ENCODE measurements at regions of chr21 and their contacts with region 1.

Region 1: GRCh38 chr21:32994305-32994704 is 31.4 kb upstream of the OLIG2 start:
- DNase-seq: peak; percentile 40
- H3K4me3 Mint-ChIP-seq: no peak overlapping the region
- H3K27ac Mint-ChIP-seq: no peak overlapping the region
- H3K4me1 Mint-ChIP-seq: peaks cover 7% of the 10 kb centered on the region
- H3K27me3 Mint-ChIP-seq: peaks cover 64% of the 10 kb centered on the region
- CTCF ChIP-seq: peak; percentile 56

Region 2: GRCh38 chr21:33007747-33008146 is 13.4 kb after region 1 on chr21:
- CTCF ChIA-PET with region 1: interaction called, 11 read pairs
- POLR2A ChIA-PET with region 1: no interaction called
- intact Hi-C with region 1: no loop called
- DNase-seq: peak; percentile 84
- H3K4me3 Mint-ChIP-seq: no peak overlapping the region
- H3K27ac Mint-ChIP-seq: peak overlapping the region; percentile 35
- H3K4me1 Mint-ChIP-seq: peaks cover 26% of the 10 kb centered on the region
- H3K27me3 Mint-ChIP-seq: peaks cover 6% of the 10 kb centered on the region
- CTCF ChIP-seq: no peak

Region 3: GRCh38 chr21:33015756-33016155 is 21.5 kb after region 1 on chr21:
- CTCF ChIA-PET with region 1: interaction called, 6 read pairs
- POLR2A ChIA-PET with region 1: no interaction called
- intact Hi-C with region 1: loop called (anchors 2 kb)
- DNase-seq: no peak
- H3K4me3 Mint-ChIP-seq: no peak overlapping the region
- H3K27ac Mint-ChIP-seq: no peak overlapping the region
- H3K4me1 Mint-ChIP-seq: peaks cover 22% of the 10 kb centered on the region
- H3K27me3 Mint-ChIP-seq: peaks cover 64% of the 10 kb centered on the region
- CTCF ChIP-seq: no peak

Region 4: DNA sequence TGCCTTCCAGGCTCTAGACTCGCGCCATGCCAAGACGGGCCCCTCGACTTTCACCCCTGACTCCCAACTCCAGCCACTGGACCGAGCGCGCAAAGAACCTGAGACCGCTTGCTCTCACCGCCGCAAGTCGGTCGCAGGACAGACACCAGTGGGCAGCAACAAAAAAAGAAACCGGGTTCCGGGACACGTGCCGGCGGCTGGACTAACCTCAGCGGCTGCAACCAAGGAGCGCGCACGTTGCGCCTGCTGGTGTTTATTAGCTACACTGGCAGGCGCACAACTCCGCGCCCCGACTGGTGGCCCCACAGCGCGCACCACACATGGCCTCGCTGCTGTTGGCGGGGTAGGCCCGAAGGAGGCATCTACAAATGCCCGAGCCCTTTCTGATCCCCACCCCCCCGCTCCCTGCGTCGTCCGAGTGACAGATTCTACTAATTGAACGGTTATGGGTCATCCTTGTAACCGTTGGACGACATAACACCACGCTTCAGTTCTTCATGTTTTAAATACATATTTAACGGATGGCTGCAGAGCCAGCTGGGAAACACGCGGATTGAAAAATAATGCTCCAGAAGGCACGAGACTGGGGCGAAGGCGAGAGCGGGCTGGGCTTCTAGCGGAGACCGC is 29.4 kb after region 1 on chr21:
- CTCF ChIA-PET with region 1: interaction called, 10 read pairs
- POLR2A ChIA-PET with region 1: no interaction called
- intact Hi-C with region 1: no loop called
- DNase-seq: no peak
- H3K4me3 Mint-ChIP-seq: no peak overlapping the region
- H3K27ac Mint-ChIP-seq: no peak overlapping the region
- H3K4me1 Mint-ChIP-seq: peaks cover 15% of the 10 kb centered on the region
- H3K27me3 Mint-ChIP-seq: peaks cover 92% of the 10 kb centered on the region
- CTCF ChIP-seq: no peak